GM10248 (cell line): ENCODE measurements at regions of chr13 and their contacts with region 1.

Region 1: GRCh38 chr13:102394158-102395053 is 7.4 kb downstream of the FGF14 start:
- DNase-seq: peak; percentile 97
- CTCF ChIP-seq: peak; percentile 53

Region 2: GRCh38 chr13:102351521-102351920 is 42.9 kb before region 1 on chr13:
- CTCF ChIA-PET with region 1: no interaction called
- POLR2A ChIA-PET with region 1: no interaction called
- DNase-seq: no peak
- CTCF ChIP-seq: no peak

Region 3: GRCh38 chr13:102405496-102406100 is 11.2 kb after region 1 on chr13:
- CTCF ChIA-PET with region 1: interaction called, 15 read pairs
- POLR2A ChIA-PET with region 1: interaction called, 3 read pairs
- DNase-seq: no peak
- CTCF ChIP-seq: no peak

Region 4: GRCh38 chr13:102510072-102510471 is 115.7 kb after region 1 on chr13:
- CTCF ChIA-PET with region 1: no interaction called
- POLR2A ChIA-PET with region 1: no interaction called
- DNase-seq: no peak
- CTCF ChIP-seq: no peak

Region 5: GRCh38 chr13:102960959-102961358 is 566.6 kb after region 1 on chr13:
- CTCF ChIA-PET with region 1: no interaction called
- POLR2A ChIA-PET with region 1: no interaction called
- DNase-seq: no peak
- CTCF ChIP-seq: no peak